ENCODE measurements at regions of chr22 and their contacts with region 1.

Region 1: DNA sequence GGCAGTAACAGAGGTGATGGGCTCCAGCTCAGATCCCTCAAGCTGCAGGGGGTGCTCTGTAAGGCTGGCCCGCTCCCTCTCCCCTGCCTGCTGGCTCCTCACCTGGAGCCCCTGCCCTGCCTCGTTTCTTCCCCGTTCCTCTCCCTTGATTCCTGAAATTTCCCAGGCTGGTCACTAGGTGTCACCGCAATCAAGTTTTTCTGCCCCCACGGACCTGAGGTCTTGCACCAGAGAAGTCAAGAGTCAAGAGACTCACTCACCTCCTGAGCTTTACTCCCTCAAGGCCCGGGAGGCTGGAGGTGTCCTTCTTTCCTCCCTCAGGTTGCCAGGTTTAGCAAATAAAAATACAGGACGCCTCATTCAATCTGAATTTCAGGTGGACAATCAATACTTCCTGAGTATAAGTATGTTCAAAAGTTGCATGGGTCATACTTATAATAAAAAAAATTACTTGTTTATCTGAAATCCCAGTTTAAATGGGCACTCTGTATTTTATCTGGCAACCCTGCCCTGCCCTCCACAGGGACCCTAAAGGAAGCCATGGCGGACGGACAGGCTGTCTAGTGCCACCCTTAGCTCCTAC is 69.2 kb downstream of the SCUBE1 start:
- DNase-seq: peak in 1 of 3 donors; percentile 37
- ATAC-seq: peak; percentile 58
- H3K4me3 ChIP-seq: no peak overlapping the region
- H3K4me1 ChIP-seq: peaks cover 7% of the 10 kb centered on the region
- CTCF ChIP-seq: peak; percentile 18

Region 2: GRCh38 chr22:43346521-43346929 is 72.5 kb after region 1 on chr22:
- intact Hi-C with region 1: loop called (anchors 10 kb)
- DNase-seq: peak in 2 of 3 donors; percentile 80
- ATAC-seq: peak; percentile 63
- H3K4me3 ChIP-seq: no peak overlapping the region
- H3K4me1 ChIP-seq: peaks cover 3% of the 10 kb centered on the region
- CTCF ChIP-seq: peak; percentile 46

Region 3: DNA sequence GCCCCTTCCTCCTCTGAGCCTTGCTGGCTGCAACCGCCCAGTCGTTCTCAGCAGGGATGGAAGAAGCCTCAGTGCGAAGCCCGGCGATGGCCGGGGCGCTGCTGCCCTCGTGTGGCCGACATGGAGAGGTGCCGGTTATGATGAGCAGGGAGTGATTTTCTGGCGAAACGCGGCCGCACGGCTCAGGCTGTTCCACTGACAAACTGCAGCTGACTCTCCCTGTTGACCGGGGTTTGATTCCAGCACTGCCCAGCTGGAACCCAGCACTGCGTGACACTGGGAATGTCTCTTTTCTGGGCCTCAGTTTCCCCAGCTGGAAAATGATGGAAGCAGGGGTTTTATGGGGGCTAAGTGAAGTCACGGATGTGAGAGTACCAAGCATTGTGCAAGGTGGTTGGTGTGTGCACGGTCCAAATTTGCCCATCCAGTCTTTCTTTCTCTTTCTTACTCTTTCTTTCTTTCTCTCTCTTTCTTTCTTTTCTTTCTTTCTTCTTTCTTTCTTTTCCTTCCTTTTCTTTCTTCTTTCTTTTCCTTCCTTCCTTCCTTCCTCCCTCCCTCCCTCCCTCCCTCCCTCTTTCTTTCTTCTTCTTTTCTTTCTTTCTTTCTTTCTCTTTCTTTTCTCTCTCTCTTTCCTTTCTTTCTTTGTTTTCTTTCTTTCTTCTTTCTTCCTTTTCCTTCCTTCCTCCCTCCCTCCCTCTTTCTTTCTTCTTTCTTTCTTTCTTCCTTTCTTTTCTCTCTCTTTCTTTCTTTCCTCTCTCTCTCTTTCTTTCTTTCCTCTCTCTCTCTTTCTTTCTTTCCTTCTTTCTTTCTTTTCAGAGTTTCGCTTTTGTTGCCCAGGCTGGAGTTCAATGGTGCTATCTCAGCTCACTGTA is 112.0 kb after region 1 on chr22:
- intact Hi-C with region 1: loop called (anchors 10 kb)
- DNase-seq: peak; percentile 71 to 84 (median 80)
- ATAC-seq: peak; percentile 94
- H3K4me3 ChIP-seq: no peak overlapping the region
- H3K4me1 ChIP-seq: no peaks in the 10 kb centered on the region
- CTCF ChIP-seq: peak; percentile 84

Measured in mucosa of descending colon (tissue), 3 donors.